Breast epithelium (tissue), 4 donors: ENCODE measurements at regions of chr7 and their contacts with region 1.

Region 1: DNA sequence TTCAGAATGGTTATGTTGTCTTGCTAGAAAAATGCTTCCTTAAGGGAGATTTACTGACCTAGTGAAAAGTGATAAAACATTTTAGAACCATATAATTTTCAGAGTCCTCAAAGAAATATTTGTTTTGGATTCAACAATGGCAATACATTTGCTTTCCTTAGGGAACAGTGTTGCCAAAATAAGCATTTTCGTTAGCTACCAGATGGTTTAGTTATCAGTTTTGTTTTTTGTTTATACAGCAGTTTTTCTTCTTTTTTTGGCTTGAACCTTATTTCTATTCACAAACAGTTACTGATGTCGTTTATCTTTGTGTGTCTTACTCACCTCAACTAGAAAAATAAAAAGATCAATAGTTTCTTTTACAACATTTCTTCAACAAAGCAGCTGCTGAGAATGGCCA is 48.6 kb downstream of the EXOC4 start:
- DNase-seq: no peak
- H3K4me3 ChIP-seq: no peak overlapping the region
- H3K27ac ChIP-seq: no peak overlapping the region
- H3K4me1 ChIP-seq: no peaks in the 10 kb centered on the region
- H3K27me3 ChIP-seq: no peaks in the 10 kb centered on the region
- CTCF ChIP-seq: no peak
- POLR2A ChIP-seq: no peak

Region 2: GRCh38 chr7:132234711-132235110 is 1066.7 kb before region 1 on chr7:
- intact Hi-C with region 1: loop called (anchors 5 kb)
- DNase-seq: no peak
- H3K4me3 ChIP-seq: no peak overlapping the region
- H3K27ac ChIP-seq: no peak overlapping the region
- H3K4me1 ChIP-seq: no peaks in the 10 kb centered on the region
- H3K27me3 ChIP-seq: no peaks in the 10 kb centered on the region
- CTCF ChIP-seq: no peak
- POLR2A ChIP-seq: no peak